Activated CD4-positive, alpha-beta T cell treated with anti-CD3 and anti-CD28 coated beads for 36 hours (primary cell): ENCODE measurements at regions of chr10 and their contacts with region 1.

Region 1: DNA sequence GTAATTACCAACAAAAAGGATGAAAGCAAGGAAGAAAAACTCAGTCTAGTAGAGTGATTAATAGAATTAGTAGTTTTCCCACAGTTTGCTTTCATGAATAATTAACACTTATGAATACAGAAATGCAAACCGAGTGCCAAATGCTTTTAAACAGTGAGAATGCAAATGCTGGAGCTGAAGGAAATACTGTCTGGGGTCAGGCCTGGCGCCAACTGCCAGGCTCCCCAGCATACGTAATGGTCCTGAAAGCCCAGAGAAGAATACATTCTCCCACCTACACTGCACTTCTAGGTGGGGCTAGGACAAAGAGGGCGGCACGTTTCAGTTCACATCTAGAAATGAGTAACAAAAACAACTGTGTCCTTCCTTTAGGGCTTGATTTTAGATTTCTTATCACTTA is 30.0 kb downstream of the GLUD1 start:
- DNase-seq: no peak
- ATAC-seq: no peak
- H3K4me3 Mint-ChIP-seq: no peak overlapping the region
- H3K27ac Mint-ChIP-seq: no peak overlapping the region
- H3K4me1 Mint-ChIP-seq: no peaks in the 10 kb centered on the region
- H3K27me3 Mint-ChIP-seq: no peaks in the 10 kb centered on the region

Region 2: GRCh38 chr10:86486856-86487255 is 577.8 kb before region 1 on chr10:
- CTCF ChIA-PET with region 1: no interaction called
- POLR2A ChIA-PET with region 1: interaction called, 10 read pairs
- intact Hi-C with region 1: no loop called
- DNase-seq: no peak
- ATAC-seq: peak; percentile 23
- H3K4me3 Mint-ChIP-seq: no peak overlapping the region
- H3K27ac Mint-ChIP-seq: peak overlapping the region; percentile 3
- H3K4me1 Mint-ChIP-seq: peaks cover 20% of the 10 kb centered on the region
- H3K27me3 Mint-ChIP-seq: no peaks in the 10 kb centered on the region